MCF 10A (cell line): ENCODE measurements at regions of chr17 and their contacts with region 1.

Region 1: GRCh38 chr17:1716076-1716995 is 6.2 kb upstream of the TLCD2 start:
- DNase-seq: peak; percentile 100
- H3K4me3 Mint-ChIP-seq: peak overlapping the region; percentile 87
- H3K27ac Mint-ChIP-seq: peak overlapping the region; percentile 93
- H3K4me1 Mint-ChIP-seq: peaks cover 24% of the 10 kb centered on the region
- H3K27me3 Mint-ChIP-seq: no peaks in the 10 kb centered on the region
- CTCF ChIP-seq: no peak

Region 2: DNA sequence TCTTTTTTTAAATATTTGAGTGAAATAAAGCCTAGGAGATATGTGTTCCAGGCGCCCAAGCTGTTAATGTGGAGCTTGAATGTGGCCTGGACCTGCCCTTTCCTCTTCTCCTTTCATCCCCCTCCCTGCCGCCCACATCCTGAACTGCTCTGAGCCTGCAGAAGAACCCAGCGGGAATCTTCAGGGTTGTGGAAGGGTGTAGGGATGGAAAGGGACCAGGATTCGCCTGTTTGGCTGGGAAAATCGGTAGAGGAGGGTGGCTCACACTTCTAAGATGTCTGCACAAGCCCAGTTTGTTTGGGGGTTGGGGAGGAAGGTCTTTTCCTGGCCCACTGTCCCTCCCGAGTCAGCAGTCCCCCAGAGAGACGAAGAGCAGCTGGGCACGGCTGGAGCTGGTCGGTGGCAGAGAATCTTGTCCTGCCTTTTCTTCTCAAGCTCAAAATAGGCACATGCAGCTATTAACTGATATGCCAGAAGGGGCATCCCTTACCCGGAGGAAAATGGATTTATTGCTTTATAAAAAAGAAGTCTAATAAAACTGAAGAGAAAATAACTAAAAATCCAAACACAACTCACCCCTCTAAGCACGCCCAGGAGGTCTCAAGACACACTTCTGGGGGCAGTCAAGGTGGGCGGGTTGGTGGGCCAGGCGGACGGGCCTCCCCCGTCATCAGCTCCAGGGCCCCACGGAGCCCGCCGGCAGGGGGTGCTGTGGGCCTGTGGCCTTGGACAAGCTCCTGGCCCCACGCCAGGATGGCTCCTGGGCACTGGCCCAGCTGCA is 142.2 kb before region 1 on chr17:
- CTCF ChIA-PET with region 1: interaction called, 6 read pairs
- POLR2A ChIA-PET with region 1: interaction called, 14 read pairs
- intact Hi-C with region 1: loop called (anchors 10 kb)
- DNase-seq: peak; percentile 87
- H3K4me3 Mint-ChIP-seq: no peak overlapping the region
- H3K27ac Mint-ChIP-seq: no peak overlapping the region
- H3K4me1 Mint-ChIP-seq: peaks cover 10% of the 10 kb centered on the region
- H3K27me3 Mint-ChIP-seq: no peaks in the 10 kb centered on the region
- CTCF ChIP-seq: peak; percentile 97

Region 3: DNA sequence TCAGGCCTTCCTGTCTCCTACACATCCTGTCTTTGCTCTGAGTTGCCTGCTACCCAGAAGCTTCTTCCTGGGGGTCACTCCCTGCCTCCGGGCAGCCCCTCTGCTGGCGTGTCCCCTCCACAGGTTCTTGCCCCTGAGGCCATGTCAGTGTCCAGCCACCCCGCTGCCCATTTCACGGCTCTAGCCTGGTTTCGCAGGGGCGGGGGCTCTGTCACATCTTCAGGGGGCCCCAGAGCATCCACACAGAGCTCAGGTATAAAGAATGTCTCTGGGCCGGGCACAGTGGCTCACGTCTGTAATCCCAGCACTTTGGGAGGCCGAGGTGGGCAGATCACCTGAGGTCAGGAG is 77.4 kb before region 1 on chr17:
- CTCF ChIA-PET with region 1: no interaction called
- POLR2A ChIA-PET with region 1: no interaction called
- intact Hi-C with region 1: no loop called
- DNase-seq: no peak
- H3K4me3 Mint-ChIP-seq: no peak overlapping the region
- H3K27ac Mint-ChIP-seq: no peak overlapping the region
- H3K4me1 Mint-ChIP-seq: peaks cover 1% of the 10 kb centered on the region
- H3K27me3 Mint-ChIP-seq: no peaks in the 10 kb centered on the region
- CTCF ChIP-seq: no peak

Region 4: GRCh38 chr17:1673041-1673785 is 43.1 kb before region 1 on chr17:
- CTCF ChIA-PET with region 1: interaction called, 8 read pairs
- POLR2A ChIA-PET with region 1: interaction called, 19 read pairs
- intact Hi-C with region 1: loop called (anchors 1 kb)
- DNase-seq: no peak
- H3K4me3 Mint-ChIP-seq: no peak overlapping the region
- H3K27ac Mint-ChIP-seq: no peak overlapping the region
- H3K4me1 Mint-ChIP-seq: peaks cover 11% of the 10 kb centered on the region
- H3K27me3 Mint-ChIP-seq: no peaks in the 10 kb centered on the region
- CTCF ChIP-seq: no peak

Region 5: GRCh38 chr17:1730328-1731193 is 14.2 kb after region 1 on chr17:
- CTCF ChIA-PET with region 1: interaction called, 12 read pairs
- POLR2A ChIA-PET with region 1: interaction called, 26 read pairs
- intact Hi-C with region 1: no loop called
- DNase-seq: peak; percentile 70
- H3K4me3 Mint-ChIP-seq: peak overlapping the region; percentile 47
- H3K27ac Mint-ChIP-seq: peak overlapping the region; percentile 81
- H3K4me1 Mint-ChIP-seq: peaks cover 25% of the 10 kb centered on the region
- H3K27me3 Mint-ChIP-seq: no peaks in the 10 kb centered on the region
- CTCF ChIP-seq: no peak

Region 6: DNA sequence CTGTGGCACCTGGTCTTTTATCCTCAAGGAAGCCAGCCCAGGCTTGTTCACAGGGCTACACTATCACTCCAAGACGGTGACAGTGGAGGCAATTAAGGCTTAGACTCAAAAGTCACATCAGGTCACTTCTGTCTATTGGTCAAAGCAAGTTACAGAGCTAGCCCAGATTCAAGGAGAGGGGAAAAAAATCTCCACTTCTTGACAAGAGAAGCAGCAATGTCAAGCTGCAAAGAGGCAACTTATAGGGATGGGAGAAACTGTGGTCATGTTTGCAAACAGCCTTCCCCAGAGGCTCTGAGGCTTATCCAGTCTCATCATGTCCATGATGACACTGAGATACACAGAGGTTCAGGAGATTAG is 77.1 kb after region 1 on chr17:
- CTCF ChIA-PET with region 1: interaction called, 211 read pairs
- POLR2A ChIA-PET with region 1: interaction called, 44 read pairs
- intact Hi-C with region 1: no loop called
- DNase-seq: peak; percentile 54
- H3K4me3 Mint-ChIP-seq: peak overlapping the region; percentile 31
- H3K27ac Mint-ChIP-seq: peak overlapping the region; percentile 74
- H3K4me1 Mint-ChIP-seq: peaks cover 5% of the 10 kb centered on the region
- H3K27me3 Mint-ChIP-seq: no peaks in the 10 kb centered on the region
- CTCF ChIP-seq: no peak

Region 7: GRCh38 chr17:2029911-2030778 is 313.8 kb after region 1 on chr17 and contains the start of gene DPH1:
- CTCF ChIA-PET with region 1: interaction called, 4 read pairs
- POLR2A ChIA-PET with region 1: interaction called, 5 read pairs
- intact Hi-C with region 1: loop called (anchors 5 kb)
- DNase-seq: peak; percentile 88
- H3K4me3 Mint-ChIP-seq: peak within 1 kb of the TSS; percentile 86
- H3K27ac Mint-ChIP-seq: peak within 1 kb of the TSS; percentile 74
- H3K4me1 Mint-ChIP-seq: peaks cover 5% of the 10 kb centered on the region
- H3K27me3 Mint-ChIP-seq: no peaks in the 10 kb centered on the region
- CTCF ChIP-seq: no peak
- total RNA-seq, gene DPH1: 29.7 and 45.2 TPM in 2 replicates